Prostate gland (tissue), 2 donors: ENCODE measurements at regions of chr9 and their contacts with region 1.

Region 1: GRCh38 chr9:4228606-4229005 is 71.3 kb downstream of the GLIS3 start:
- DNase-seq: no peak
- H3K4me3 ChIP-seq: no peak overlapping the region
- H3K27ac ChIP-seq: no peak overlapping the region
- H3K4me1 ChIP-seq: no peaks in the 10 kb centered on the region
- H3K27me3 ChIP-seq: no peaks in the 10 kb centered on the region
- CTCF ChIP-seq: peak in 3 of 4 experiments; percentile 22 to 56 (median 41)
- POLR2A ChIP-seq: no peak

Region 2: GRCh38 chr9:3954331-3955304 is 274.0 kb before region 1 on chr9:
- intact Hi-C with region 1: loop called (anchors 10 kb)
- DNase-seq: no peak
- H3K4me3 ChIP-seq: no peak overlapping the region
- H3K27ac ChIP-seq: no peak overlapping the region
- H3K4me1 ChIP-seq: no peaks in the 10 kb centered on the region
- H3K27me3 ChIP-seq: no peaks in the 10 kb centered on the region
- CTCF ChIP-seq: no peak
- POLR2A ChIP-seq: no peak

Region 3: GRCh38 chr9:4077499-4078102 is 151.0 kb before region 1 on chr9:
- intact Hi-C with region 1: loop called (anchors 2 kb)
- DNase-seq: peak; percentile 36
- H3K4me3 ChIP-seq: no peak overlapping the region
- H3K27ac ChIP-seq: no peak overlapping the region
- H3K4me1 ChIP-seq: no peaks in the 10 kb centered on the region
- H3K27me3 ChIP-seq: no peaks in the 10 kb centered on the region
- CTCF ChIP-seq: peak in 3 of 4 experiments; percentile 31 to 49 (median 41)
- POLR2A ChIP-seq: no peak

Region 4: DNA sequence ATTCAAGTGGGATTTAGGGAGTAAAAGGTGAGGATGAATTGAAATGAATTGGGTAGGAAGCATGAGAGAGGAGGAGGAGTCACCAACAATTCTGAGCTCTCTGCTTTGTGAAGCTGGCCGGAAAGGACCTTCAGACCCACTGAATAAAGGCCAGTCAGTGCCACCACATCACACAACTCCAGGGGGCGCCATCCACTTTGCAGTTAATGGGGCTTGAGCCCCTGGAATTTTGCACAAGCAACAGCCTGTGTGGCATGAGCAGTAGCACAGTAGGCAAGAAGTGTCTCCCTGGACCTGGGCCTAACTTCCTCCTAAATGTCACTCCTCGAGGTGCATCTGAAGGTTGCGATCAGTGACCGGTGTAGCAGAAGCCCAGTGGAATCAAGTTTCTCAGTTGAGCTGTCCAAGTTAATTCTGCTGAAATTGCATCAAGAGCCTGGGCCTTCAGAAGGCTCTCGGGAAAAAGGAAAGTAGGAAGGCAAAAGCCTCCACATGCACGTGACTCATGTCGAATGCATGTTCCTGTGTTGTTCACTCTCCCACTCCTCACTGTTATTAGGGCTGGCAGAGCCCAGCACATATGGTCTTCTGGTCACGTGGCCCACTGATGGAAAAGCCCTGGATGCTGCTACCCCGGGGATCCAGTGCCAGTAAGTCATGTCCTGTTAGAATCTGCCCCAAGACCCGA is 99.0 kb after region 1 on chr9:
- intact Hi-C with region 1: no loop called
- DNase-seq: no peak
- H3K4me3 ChIP-seq: no peak overlapping the region
- H3K27ac ChIP-seq: no peak overlapping the region
- H3K4me1 ChIP-seq: no peaks in the 10 kb centered on the region
- H3K27me3 ChIP-seq: no peaks in the 10 kb centered on the region
- CTCF ChIP-seq: no peak
- POLR2A ChIP-seq: no peak

Region 5: GRCh38 chr9:4339357-4339756 is 110.8 kb after region 1 on chr9:
- intact Hi-C with region 1: no loop called
- DNase-seq: peak; percentile 86
- H3K4me3 ChIP-seq: no peak overlapping the region
- H3K27ac ChIP-seq: no peak overlapping the region
- H3K4me1 ChIP-seq: no peaks in the 10 kb centered on the region
- H3K27me3 ChIP-seq: no peaks in the 10 kb centered on the region
- CTCF ChIP-seq: peak; percentile 86 to 91 (median 89)
- POLR2A ChIP-seq: no peak

Region 6: GRCh38 chr9:4489919-4490704 is 261.5 kb after region 1 on chr9 and contains the start of gene SLC1A1:
- intact Hi-C with region 1: no loop called
- DNase-seq: peak; percentile 60
- H3K4me3 ChIP-seq: peak within 1 kb of the TSS; percentile 49 to 70
- H3K27ac ChIP-seq: peak within 1 kb of the TSS; percentile 66 to 76
- H3K4me1 ChIP-seq: no peaks in the 10 kb centered on the region
- H3K27me3 ChIP-seq: no peaks in the 10 kb centered on the region
- CTCF ChIP-seq: peak in 1 of 4 experiments; percentile 5
- POLR2A ChIP-seq: peak; percentile 34
- total RNA-seq, gene SLC1A1: 2.9 to 13.1 TPM

Region 7: DNA sequence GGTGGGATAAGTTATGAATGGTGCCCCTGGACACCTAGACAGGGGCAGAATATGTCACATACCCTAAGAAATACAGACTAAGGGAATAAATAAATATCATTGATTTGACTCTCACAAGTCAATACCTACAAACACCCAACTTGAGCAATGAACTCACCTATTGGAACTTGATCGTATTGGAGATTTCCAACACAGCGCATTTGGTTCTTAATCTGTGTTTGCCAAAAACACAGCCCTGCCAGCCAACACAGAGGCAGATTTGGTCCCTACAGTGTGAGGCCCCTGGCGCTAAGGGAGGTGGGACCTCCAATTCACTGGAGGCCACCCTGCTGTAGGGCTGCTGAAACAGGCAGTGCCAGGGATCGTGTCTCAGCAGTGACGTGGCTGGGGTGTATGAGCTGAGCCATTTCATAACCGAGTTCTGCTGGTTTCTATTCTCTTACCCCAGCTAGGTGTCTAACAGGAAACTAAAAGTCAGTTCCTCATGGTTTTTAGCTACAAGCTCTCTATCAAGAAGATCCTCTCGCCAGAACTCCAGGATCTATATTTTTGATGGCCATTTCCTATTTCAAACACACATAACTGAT is 346.1 kb after region 1 on chr9:
- intact Hi-C with region 1: no loop called
- DNase-seq: no peak
- H3K4me3 ChIP-seq: no peak overlapping the region
- H3K27ac ChIP-seq: peak overlapping the region; percentile 0 to 49
- H3K4me1 ChIP-seq: no peaks in the 10 kb centered on the region
- H3K27me3 ChIP-seq: no peaks in the 10 kb centered on the region
- CTCF ChIP-seq: no peak
- POLR2A ChIP-seq: no peak